Colonic mucosa (tissue), 4 donors: ENCODE measurements at regions of chr3 and their contacts with region 1.

Region 1: GRCh38 chr3:192444096-192444790 is 283.1 kb downstream of the FGF12 start:
- DNase-seq: peak; percentile 42
- H3K4me3 ChIP-seq: no peak overlapping the region
- H3K27ac ChIP-seq: no peak overlapping the region
- H3K4me1 ChIP-seq: no peaks in the 10 kb centered on the region
- H3K27me3 ChIP-seq: no peaks in the 10 kb centered on the region
- CTCF ChIP-seq: peak; percentile 97

Region 2: GRCh38 chr3:192130534-192131132 is 313.6 kb before region 1 on chr3:
- intact Hi-C with region 1: loop called (anchors 5 kb)
- DNase-seq: peak; percentile 36
- H3K4me3 ChIP-seq: no peak overlapping the region
- H3K27ac ChIP-seq: no peak overlapping the region
- H3K4me1 ChIP-seq: no peaks in the 10 kb centered on the region
- H3K27me3 ChIP-seq: no peaks in the 10 kb centered on the region
- CTCF ChIP-seq: peak; percentile 40

Region 3: GRCh38 chr3:192188218-192188835 is 255.9 kb before region 1 on chr3:
- intact Hi-C with region 1: loop called (anchors 5 kb)
- DNase-seq: peak; percentile 40
- H3K4me3 ChIP-seq: no peak overlapping the region
- H3K27ac ChIP-seq: no peak overlapping the region
- H3K4me1 ChIP-seq: no peaks in the 10 kb centered on the region
- H3K27me3 ChIP-seq: no peaks in the 10 kb centered on the region
- CTCF ChIP-seq: peak; percentile 54